CD4-positive, alpha-beta memory T cell (primary cell): ENCODE measurements at regions of chr9 and their contacts with region 1.

Region 1: GRCh38 chr9:10403283-10403682 is 209.5 kb downstream of the PTPRD start:
- DNase-seq: no peak
- H3K4me3 ChIP-seq: no peak overlapping the region
- H3K4me3 Mint-ChIP-seq: no peak overlapping the region
- H3K27ac ChIP-seq: no peak overlapping the region
- H3K27ac Mint-ChIP-seq: no peak overlapping the region
- H3K4me1 ChIP-seq: no peaks in the 10 kb centered on the region
- H3K4me1 Mint-ChIP-seq: no peaks in the 10 kb centered on the region
- H3K27me3 ChIP-seq: no peaks in the 10 kb centered on the region
- H3K27me3 Mint-ChIP-seq: no peaks in the 10 kb centered on the region

Region 2: GRCh38 chr9:10346765-10347164 is 56.5 kb before region 1 on chr9:
- CTCF ChIA-PET with region 1: no interaction called
- POLR2A ChIA-PET with region 1: no interaction called
- intact Hi-C with region 1: loop called (anchors 10 kb)
- DNase-seq: no peak
- H3K4me3 ChIP-seq: no peak overlapping the region
- H3K4me3 Mint-ChIP-seq: no peak overlapping the region
- H3K27ac ChIP-seq: no peak overlapping the region
- H3K27ac Mint-ChIP-seq: no peak overlapping the region
- H3K4me1 ChIP-seq: no peaks in the 10 kb centered on the region
- H3K4me1 Mint-ChIP-seq: no peaks in the 10 kb centered on the region
- H3K27me3 ChIP-seq: no peaks in the 10 kb centered on the region
- H3K27me3 Mint-ChIP-seq: no peaks in the 10 kb centered on the region